Activated CD8-positive, alpha-beta memory T cell treated with anti-CD3 and anti-CD28 coated beads, Interleukin-2, amount 10 ng/mL, durations not matched to agents 7 days and 5 days (primary cell): ENCODE measurements at regions of chr17 and their contacts with region 1.

Region 1: DNA sequence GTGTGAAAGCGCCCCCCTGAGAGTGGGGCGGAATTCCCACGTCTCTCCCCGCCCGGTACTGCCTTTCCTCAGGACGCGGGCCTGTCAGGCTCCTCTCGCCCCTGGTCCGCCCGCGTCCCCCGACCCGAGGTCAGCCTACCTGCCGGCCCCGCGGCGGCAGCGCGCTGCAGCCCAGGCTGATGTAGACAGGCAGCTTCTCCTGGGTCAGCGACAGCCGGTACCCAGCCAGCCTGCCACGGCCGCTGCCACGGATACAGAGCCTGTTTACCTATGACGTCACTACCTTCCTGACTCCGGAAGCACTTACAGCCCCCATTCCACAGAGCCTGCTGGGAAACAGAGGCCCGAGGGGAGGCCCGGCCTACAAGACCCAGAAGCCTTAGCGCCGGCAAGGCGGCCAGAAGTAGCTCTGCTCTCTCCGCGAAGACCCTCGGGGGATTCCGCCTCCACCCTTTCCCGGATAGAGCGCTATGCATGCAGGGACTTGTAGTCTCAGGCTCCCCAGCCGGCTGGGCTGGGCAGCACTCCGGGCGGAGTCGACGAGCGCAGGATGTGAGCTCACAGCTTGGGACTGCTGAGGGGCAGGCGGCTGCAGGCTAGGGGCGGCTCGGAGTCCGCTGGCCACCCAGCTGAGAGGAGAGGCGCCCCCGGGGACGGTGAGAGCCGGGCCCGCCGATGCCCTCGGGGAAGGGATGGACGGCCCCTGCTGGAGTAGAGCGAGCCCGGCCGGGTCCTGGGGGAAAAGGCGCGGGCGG is at the starts of genes IFT20 and TNFAIP1:
- DNase-seq: peak; percentile 100
- ATAC-seq: peak; percentile 96
- H3K4me3 Mint-ChIP-seq: peak within 1 kb of the TSS; percentile 97
- H3K27ac Mint-ChIP-seq: peak within 1 kb of the TSS; percentile 92
- H3K4me1 Mint-ChIP-seq: peaks cover 36% of the 10 kb centered on the region
- H3K27me3 Mint-ChIP-seq: no peaks in the 10 kb centered on the region
- total RNA-seq, gene IFT20: 20.2 to 22.8 TPM
- total RNA-seq, gene TNFAIP1: 19.5 to 22.2 TPM

Region 2: GRCh38 chr17:28318759-28319660 is 16.4 kb before region 1 on chr17 and contains the start of gene TMEM97:
- CTCF ChIA-PET with region 1: interaction called, 31 read pairs
- DNase-seq: peak; percentile 98
- ATAC-seq: peak; percentile 99
- H3K4me3 Mint-ChIP-seq: peak within 1 kb of the TSS; percentile 94
- H3K27ac Mint-ChIP-seq: peak within 1 kb of the TSS; percentile 89
- H3K4me1 Mint-ChIP-seq: peaks cover 42% of the 10 kb centered on the region
- H3K27me3 Mint-ChIP-seq: no peaks in the 10 kb centered on the region
- total RNA-seq, gene TMEM97: 26.2 to 39.7 TPM

Region 3: DNA sequence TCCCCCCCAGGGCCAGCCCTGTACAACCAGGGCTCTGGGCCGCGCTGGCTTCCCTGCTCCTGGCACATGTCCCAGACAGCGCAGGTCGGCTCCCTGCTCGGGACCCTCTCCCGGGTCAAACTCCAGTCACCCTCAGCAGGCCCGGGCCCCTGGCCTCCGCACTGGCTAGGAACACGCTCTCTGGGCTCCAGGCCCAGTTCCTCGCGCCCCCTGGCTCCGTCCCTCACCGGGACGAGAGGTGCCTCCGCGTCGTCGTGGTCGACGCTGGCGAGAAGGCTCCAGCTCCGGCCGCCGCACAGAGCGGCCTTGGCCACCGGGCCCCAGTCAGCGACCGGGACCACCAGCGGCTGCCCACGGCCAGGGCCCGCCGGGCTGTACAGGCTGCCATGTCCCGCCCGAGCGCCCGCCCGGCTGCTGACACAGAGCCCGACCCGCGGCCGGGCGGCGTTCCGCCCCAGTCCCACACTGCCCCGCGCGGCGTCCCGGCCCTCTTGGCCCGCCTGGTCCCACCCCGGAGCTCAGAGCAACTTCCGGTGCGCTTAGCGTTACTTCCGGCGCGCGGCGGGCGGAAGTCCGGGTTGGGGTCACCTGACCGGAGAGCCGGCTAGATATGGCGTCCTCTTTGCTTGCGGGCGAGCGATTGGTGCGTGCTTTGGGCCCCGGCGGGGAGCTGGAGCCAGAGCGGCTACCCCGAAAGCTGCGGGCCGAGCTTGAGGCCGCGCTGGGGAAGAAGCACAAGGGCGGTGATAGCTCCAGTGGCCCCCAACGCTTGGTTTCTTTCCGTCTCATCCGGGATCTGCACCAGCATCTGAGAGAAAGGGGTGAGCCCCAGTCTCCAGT is 21.9 kb after region 1 on chr17 and contains the start of gene POLDIP2:
- CTCF ChIA-PET with region 1: interaction called, 17 read pairs
- DNase-seq: peak; percentile 97
- ATAC-seq: peak; percentile 99
- H3K4me3 Mint-ChIP-seq: peak within 1 kb of the TSS; percentile 93
- H3K27ac Mint-ChIP-seq: peak within 1 kb of the TSS; percentile 92
- H3K4me1 Mint-ChIP-seq: peaks cover 35% of the 10 kb centered on the region
- H3K27me3 Mint-ChIP-seq: no peaks in the 10 kb centered on the region
- total RNA-seq, gene POLDIP2: 68.6 to 83.5 TPM